Caco-2 (cell line): ENCODE measurements at regions of chr4 and their contacts with region 1.

Region 1: DNA sequence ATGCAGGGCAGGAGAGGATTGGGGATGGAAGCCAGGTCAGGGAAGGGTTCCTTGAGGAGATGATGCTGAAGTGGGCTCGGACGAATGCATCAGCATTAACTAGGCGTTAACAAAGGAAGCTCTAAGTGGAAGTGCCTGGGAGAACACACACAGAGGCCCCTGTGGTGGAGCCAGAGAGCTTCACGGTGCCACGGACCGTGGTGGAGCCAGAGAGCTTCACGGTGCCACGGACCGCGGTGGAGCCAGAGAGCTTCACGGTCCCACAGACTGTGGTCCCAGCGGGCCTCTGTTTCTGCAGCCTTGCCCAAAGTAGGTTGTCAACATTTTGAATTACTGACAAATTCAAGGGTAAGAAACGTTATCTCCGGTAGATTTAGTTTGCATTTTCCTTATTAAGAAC is 48.3 kb downstream of the TRIML2 start:
- DNase-seq: no peak
- H3K4me3 ChIP-seq: no peak overlapping the region
- H3K4me3 Mint-ChIP-seq: no peak overlapping the region
- H3K27ac Mint-ChIP-seq: no peak overlapping the region
- H3K4me1 ChIP-seq: no peaks in the 10 kb centered on the region
- H3K4me1 Mint-ChIP-seq: no peaks in the 10 kb centered on the region
- H3K27me3 ChIP-seq: no peaks in the 10 kb centered on the region
- H3K27me3 Mint-ChIP-seq: no peaks in the 10 kb centered on the region
- CTCF ChIP-seq: no peak

Region 2: DNA sequence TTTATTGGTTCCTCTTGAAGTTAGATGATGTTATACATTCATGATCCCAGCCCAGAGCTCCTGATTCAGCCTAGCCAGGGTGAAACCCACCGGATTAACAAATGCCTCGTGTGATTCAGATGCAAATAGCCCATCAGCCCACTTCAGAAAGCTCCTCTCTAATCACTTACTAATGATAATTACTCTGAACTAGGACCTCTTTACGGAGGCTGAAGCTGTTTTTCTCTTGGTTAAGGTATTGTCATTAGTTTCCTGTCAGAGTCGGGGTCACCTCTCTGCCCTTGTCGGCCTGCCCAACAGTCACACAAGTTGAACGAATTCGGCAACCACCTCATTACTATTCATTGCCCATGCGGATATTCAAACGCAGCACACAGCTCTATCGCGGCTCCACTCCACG is 28.9 kb before region 1 on chr4:
- CTCF ChIA-PET with region 1: no interaction called
- POLR2A ChIA-PET with region 1: no interaction called
- intact Hi-C with region 1: no loop called
- DNase-seq: no peak
- H3K4me3 ChIP-seq: no peak overlapping the region
- H3K4me3 Mint-ChIP-seq: no peak overlapping the region
- H3K27ac Mint-ChIP-seq: no peak overlapping the region
- H3K4me1 ChIP-seq: no peaks in the 10 kb centered on the region
- H3K4me1 Mint-ChIP-seq: peaks cover 5% of the 10 kb centered on the region
- H3K27me3 ChIP-seq: no peaks in the 10 kb centered on the region
- H3K27me3 Mint-ChIP-seq: no peaks in the 10 kb centered on the region
- CTCF ChIP-seq: no peak

Region 3: GRCh38 chr4:188228279-188228678 is 167.2 kb after region 1 on chr4:
- CTCF ChIA-PET with region 1: interaction called, 11 read pairs
- POLR2A ChIA-PET with region 1: no interaction called
- intact Hi-C with region 1: no loop called
- DNase-seq: no peak
- H3K4me3 ChIP-seq: no peak overlapping the region
- H3K4me3 Mint-ChIP-seq: no peak overlapping the region
- H3K27ac Mint-ChIP-seq: no peak overlapping the region
- H3K4me1 ChIP-seq: no peaks in the 10 kb centered on the region
- H3K4me1 Mint-ChIP-seq: no peaks in the 10 kb centered on the region
- H3K27me3 ChIP-seq: no peaks in the 10 kb centered on the region
- H3K27me3 Mint-ChIP-seq: no peaks in the 10 kb centered on the region
- CTCF ChIP-seq: no peak